ENCODE measurements at regions of chr7 and their contacts with region 1.

Region 1: GRCh38 chr7:28207486-28208158 is 27.0 kb upstream of the JAZF1 start:
- DNase-seq: no peak
- ATAC-seq: peak; percentile 78
- H3K4me3 Mint-ChIP-seq: peak overlapping the region; percentile 66
- H3K27ac Mint-ChIP-seq: peak overlapping the region; percentile 88
- H3K4me1 Mint-ChIP-seq: peaks cover 81% of the 10 kb centered on the region
- H3K27me3 Mint-ChIP-seq: no peaks in the 10 kb centered on the region
- CTCF ChIP-seq: no peak

Region 2: DNA sequence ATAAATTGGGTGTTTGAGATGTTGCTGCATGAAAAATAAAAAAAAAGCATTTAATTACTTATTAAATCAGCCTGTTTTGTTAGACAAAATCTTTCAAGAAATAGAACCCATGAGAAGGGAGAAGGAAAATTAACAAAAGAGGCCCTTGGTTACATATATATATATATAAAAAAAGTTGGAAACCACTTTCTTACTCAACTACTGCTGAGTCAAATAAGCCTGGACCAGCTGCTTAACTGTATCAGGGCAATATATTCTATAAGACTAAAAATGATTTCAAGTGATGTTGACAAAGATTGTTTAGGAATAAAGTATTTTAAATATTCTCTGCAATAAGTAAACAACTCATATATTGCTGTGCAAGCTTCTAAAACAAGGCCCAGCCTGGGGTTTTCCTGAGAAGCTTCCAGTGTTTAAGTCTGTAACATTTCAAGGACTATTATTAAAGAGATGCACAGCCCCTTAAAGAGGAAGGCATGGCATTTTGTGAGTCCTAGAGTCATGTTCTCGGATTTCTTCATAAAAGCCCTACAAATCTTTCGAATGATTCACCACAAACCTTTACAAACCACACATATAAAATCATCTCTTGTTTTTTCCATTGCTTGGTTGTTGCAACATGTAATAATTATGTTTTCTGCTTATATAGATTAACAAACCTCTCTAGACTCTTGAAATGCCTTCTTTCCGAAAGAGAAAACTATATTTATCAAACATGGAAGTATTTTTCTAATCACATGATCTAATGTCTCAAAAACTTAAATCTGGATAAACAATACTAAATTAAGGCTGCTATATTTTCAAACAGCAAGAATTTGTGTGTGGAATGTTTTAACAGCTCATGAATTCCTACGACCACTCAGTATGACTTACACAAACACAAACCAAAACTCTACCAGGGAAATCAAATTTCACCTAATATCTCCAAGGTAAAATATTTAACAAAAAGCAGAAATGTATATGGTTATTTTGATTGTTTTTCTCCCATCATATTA is 41.4 kb before region 1 on chr7:
- CTCF ChIA-PET with region 1: interaction called, 3 read pairs
- POLR2A ChIA-PET with region 1: interaction called, 4 read pairs
- intact Hi-C with region 1: loop called (anchors 1 kb)
- DNase-seq: no peak
- ATAC-seq: no peak
- H3K4me3 Mint-ChIP-seq: peak overlapping the region; percentile 59
- H3K27ac Mint-ChIP-seq: peak overlapping the region; percentile 85
- H3K4me1 Mint-ChIP-seq: peaks cover 95% of the 10 kb centered on the region
- H3K27me3 Mint-ChIP-seq: no peaks in the 10 kb centered on the region
- CTCF ChIP-seq: no peak

Region 3: DNA sequence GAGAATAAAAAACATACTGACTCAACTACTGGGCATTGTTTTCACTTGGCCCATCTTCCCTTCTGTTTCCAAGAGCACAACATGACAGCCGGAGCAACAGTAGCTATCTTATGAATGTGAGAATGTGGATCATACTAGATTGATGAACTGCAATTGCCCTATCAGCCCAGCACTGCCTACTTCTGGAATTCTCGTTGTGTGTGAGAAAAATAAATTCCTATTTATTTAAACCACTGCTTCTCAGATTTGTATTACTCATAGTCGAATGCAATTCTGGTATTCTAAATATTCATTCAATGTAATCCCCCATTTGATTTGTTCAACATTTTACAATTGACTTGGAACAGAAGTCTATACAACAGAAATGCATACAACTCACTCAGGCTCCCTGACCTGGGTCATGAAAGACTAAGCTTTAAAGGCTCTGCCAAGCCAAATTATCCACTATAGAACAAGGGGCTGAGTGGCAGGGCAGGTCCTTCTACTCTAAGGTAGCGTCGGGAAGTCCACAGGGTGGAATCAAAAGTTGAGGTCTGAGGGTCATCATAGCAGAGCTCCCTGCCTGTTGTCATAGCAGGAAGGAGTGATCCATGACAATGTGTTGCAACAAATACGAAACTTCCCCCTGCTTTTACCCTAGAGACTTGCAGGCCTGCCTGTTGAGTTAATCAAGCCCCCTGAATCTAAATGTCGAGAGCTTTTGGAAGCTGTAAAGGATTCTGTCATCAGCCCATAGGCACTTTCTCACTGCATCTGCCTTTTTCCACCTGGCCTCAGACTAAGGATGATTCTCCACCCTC is 14.6 kb before region 1 on chr7:
- CTCF ChIA-PET with region 1: no interaction called
- POLR2A ChIA-PET with region 1: interaction called, 3 read pairs
- intact Hi-C with region 1: loop called (anchors 2 kb)
- DNase-seq: no peak
- ATAC-seq: peak; percentile 58
- H3K4me3 Mint-ChIP-seq: no peak overlapping the region
- H3K27ac Mint-ChIP-seq: no peak overlapping the region
- H3K4me1 Mint-ChIP-seq: peaks cover 54% of the 10 kb centered on the region
- H3K27me3 Mint-ChIP-seq: no peaks in the 10 kb centered on the region
- CTCF ChIP-seq: no peak

Region 4: DNA sequence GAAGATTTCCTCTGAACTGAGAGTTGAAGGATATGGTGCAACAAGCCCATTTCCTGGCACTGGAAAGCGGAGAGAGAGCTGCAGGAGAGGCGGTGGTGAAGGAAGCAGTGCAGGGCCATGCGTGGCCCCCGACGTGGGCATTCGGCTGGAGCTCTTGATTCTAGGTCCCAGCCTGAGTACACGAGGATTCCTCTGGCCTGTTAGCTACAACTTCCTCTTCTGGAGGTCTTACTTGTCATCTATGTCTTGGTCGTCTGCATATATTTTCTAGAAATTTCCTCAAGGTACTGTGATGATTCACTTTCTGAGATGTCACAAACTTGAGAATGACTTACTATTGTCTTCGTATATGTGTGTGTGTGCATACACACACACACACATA is 32.2 kb after region 1 on chr7:
- CTCF ChIA-PET with region 1: no interaction called
- POLR2A ChIA-PET with region 1: interaction called, 3 read pairs
- intact Hi-C with region 1: loop called (anchors 5 kb)
- DNase-seq: peak; percentile 18
- ATAC-seq: peak; percentile 86
- H3K4me3 Mint-ChIP-seq: peak overlapping the region; percentile 17
- H3K27ac Mint-ChIP-seq: no peak overlapping the region
- H3K4me1 Mint-ChIP-seq: peaks cover 9% of the 10 kb centered on the region
- H3K27me3 Mint-ChIP-seq: no peaks in the 10 kb centered on the region
- CTCF ChIP-seq: no peak